K562 (cell line): ENCODE measurements at regions of chr19 and their contacts with region 1.

Region 1: GRCh38 chr19:4638828-4639530 is at the start of gene TNFAIP8L1:
- DNase-seq: peak; percentile 96 to 100 (median 100)
- ATAC-seq: peak; percentile 92
- H3K4me3 ChIP-seq: peak within 1 kb of the TSS; percentile 71
- H3K27ac ChIP-seq: peak within 1 kb of the TSS; percentile 93
- H3K4me1 ChIP-seq: peaks cover 31 to 61% of the 10 kb centered on the region in 2 experiments
- H3K27me3 ChIP-seq: no peaks in the 10 kb centered on the region
- CTCF ChIP-seq: no peak
- EP300 ChIP-seq: peak; percentile 63; the same call in 1 of the 2 replicates
- POLR2A ChIP-seq: no peak; the same call in 1 of the 2 replicates
- RAD21 ChIP-seq: no peak
- polyA plus RNA-seq, gene TNFAIP8L1: 0.69 to 1.0 TPM

Region 2: GRCh38 chr19:4557971-4558941 is 80.7 kb before region 1 on chr19:
- CTCF ChIA-PET with region 1: interaction called, 29 read pairs
- POLR2A ChIA-PET with region 1: no interaction called
- in situ Hi-C with region 1: no loop called
- intact Hi-C with region 1: loop called (anchors 5 kb)
- DNase-seq: peak in 2 of 4 experiments; percentile 52 to 63
- ATAC-seq: no peak
- H3K4me3 ChIP-seq: 0 out of 2 replicates have a peak overlapping the region, but pooled peaks have one; percentile 8
- H3K27ac ChIP-seq: no peak overlapping the region
- H3K4me1 ChIP-seq: peaks cover 11 to 43% of the 10 kb centered on the region in 2 experiments
- H3K27me3 ChIP-seq: no peaks in the 10 kb centered on the region
- CTCF ChIP-seq: peak; percentile 84 to 93 (median 92)
- EP300 ChIP-seq: no peak
- POLR2A ChIP-seq: no peak
- RAD21 ChIP-seq: peak; percentile 34 to 51

Region 3: DNA sequence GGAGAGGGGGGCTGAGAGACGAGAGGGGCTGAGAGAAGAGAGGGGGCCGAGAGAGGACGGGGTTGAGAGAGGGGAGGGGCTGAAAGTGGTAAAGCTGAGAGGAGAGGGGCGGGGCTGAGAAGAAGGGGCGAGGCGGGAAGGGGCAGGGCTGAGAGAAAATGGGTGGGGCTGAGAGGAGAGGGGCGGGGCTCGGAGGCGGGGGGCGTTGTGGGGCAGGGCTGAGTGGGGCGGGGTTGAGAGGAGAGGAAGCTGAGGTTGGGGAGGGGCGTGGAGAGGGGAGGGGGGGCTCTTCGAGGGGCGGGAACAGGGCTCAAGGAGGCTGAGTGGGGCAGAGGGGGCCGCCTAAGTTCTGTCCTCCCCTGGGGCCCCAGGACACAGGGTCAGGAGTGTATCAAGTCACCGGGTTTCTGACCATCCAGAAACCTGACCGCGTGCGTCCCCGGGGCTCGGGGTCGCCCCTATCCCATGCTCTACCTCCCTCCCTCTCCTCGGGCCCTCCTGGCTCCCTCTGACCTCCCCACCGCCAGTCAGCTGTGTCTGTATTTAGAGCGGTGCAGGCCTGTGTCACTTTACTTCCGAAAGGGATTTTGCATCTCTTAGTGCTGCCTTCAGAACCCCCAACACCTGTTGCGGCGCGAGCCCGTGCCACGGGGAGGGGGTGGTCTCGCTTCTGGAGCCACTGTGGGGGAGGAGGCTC is 40.9 kb before region 1 on chr19:
- CTCF ChIA-PET with region 1: no interaction called
- POLR2A ChIA-PET with region 1: no interaction called
- in situ Hi-C with region 1: no loop called
- intact Hi-C with region 1: loop called (anchors 2 kb)
- DNase-seq: peak; percentile 85 to 97 (median 96)
- ATAC-seq: peak; percentile 90
- H3K4me3 ChIP-seq: peak overlapping the region; percentile 43
- H3K27ac ChIP-seq: no peak overlapping the region
- H3K4me1 ChIP-seq: peaks cover 9 to 19% of the 10 kb centered on the region in 2 experiments; a peak in 4 of 5 replicates
- H3K27me3 ChIP-seq: no peaks in the 10 kb centered on the region; a peak in 1 of 5 replicates
- CTCF ChIP-seq: no peak
- EP300 ChIP-seq: no peak
- POLR2A ChIP-seq: no peak
- RAD21 ChIP-seq: no peak

Region 4: DNA sequence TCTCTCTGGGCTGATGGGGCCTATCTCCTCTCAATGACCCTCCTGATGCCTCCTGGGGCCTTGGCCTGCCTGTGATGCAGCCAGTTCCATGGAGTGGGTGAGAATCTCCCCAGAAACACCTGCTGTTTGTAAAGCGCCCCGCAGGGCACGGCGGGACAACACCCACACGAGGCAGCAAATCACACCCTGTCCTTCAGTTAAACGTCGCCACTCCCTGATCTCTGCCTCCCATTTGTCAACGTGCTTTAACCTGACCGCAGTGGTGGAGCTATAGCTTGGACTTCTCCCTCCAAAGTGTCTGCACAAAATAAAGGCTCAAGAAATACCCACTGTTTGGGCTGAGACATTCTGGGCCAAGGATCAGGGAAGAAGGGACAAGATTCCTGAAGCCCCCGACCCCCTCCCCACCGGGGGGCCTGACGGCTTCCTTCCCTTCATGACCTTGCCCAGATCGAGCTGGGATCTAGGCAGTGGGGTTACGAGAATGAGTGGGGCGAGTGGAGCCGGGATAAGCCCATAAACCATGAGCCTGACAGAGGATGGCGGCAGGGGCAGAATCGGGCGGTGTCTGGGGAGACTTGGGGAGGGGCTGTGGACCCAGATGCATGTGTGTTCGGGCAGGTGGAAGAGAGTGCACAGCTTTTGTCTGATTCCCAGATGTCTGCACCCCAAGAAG is 23.2 kb after region 1 on chr19:
- CTCF ChIA-PET with region 1: no interaction called
- POLR2A ChIA-PET with region 1: no interaction called
- in situ Hi-C with region 1: no loop called
- intact Hi-C with region 1: no loop called
- DNase-seq: no peak
- ATAC-seq: no peak
- H3K4me3 ChIP-seq: no peak overlapping the region
- H3K27ac ChIP-seq: no peak overlapping the region
- H3K4me1 ChIP-seq: peaks cover 0 to 12% of the 10 kb centered on the region in 2 experiments; a peak in 3 of 5 replicates
- H3K27me3 ChIP-seq: no peaks in the 10 kb centered on the region
- CTCF ChIP-seq: no peak
- EP300 ChIP-seq: no peak
- POLR2A ChIP-seq: no peak
- RAD21 ChIP-seq: no peak